Mammary epithelial cell (primary cell): ENCODE measurements at regions of chr2 and their contacts with region 1.

Region 1: GRCh38 chr2:23760736-23761135 is 166.2 kb downstream of the ATAD2B start:
- DNase-seq: no peak
- H3K4me3 ChIP-seq: no peak overlapping the region
- H3K27ac ChIP-seq: no peak overlapping the region
- H3K4me1 ChIP-seq: peaks cover 25% of the 10 kb centered on the region
- H3K27me3 ChIP-seq: no peaks in the 10 kb centered on the region
- CTCF ChIP-seq: peak; percentile 25 to 37

Region 2: GRCh38 chr2:23384551-23385349 is 376.0 kb before region 1 on chr2 and contains the start of gene KLHL29:
- CTCF ChIA-PET with region 1: no interaction called
- dilution Hi-C with region 1: no loop called
- in situ Hi-C with region 1: no loop called
- intact Hi-C with region 1: loop called (anchors 10 kb)
- DNase-seq: peak; percentile 65
- H3K4me3 ChIP-seq: peak within 1 kb of the TSS; percentile 57 to 88 (median 66)
- H3K27ac ChIP-seq: no peak within 1 kb of the TSS
- H3K4me1 ChIP-seq: peaks cover 27% of the 10 kb centered on the region
- H3K27me3 ChIP-seq: peaks cover 2% of the 10 kb centered on the region
- CTCF ChIP-seq: no peak
- total RNA-seq, gene KLHL29: 15.6 to 16.3 TPM

Region 3: DNA sequence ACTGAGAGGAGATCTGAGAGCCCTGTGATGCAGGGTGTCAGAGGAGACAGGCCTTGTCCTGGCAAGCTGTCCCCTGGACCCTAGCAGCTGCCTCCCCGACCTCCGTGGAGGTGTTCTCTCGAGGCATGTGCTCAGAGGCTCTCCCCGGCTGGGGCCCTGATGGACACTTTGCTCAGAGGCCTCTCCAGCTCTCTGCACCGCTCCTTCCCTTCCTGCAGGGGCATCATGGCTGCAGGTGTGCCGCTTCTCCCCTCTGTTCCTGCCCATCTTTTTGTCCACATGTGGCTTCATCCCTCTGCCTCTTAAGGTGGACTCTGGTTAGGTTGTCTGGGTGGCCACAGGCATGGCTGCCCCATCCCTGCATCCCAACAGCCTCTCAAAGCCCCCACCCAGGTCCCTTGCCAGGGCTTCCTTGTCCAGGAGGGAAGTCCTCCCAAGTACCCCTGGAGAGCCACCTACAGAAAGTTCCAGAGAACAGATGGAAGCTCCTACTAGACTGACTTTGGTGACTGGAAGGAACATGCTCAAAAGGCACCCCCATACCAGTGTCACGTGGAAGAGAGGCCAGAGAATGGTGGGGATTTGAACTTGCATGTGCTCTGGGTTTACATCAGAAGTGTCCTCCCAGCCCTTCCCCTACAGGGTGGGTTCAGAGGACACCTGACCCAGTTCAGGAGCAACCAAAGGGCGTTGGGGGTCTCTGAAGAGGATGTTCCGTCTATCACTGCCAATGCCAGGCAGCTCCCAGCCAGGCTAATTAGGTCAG is 255.3 kb before region 1 on chr2:
- CTCF ChIA-PET with region 1: no interaction called
- dilution Hi-C with region 1: no loop called
- in situ Hi-C with region 1: no loop called
- intact Hi-C with region 1: loop called (anchors 10 kb)
- DNase-seq: no peak
- H3K4me3 ChIP-seq: no peak overlapping the region
- H3K27ac ChIP-seq: no peak overlapping the region
- H3K4me1 ChIP-seq: peaks cover 28% of the 10 kb centered on the region
- H3K27me3 ChIP-seq: no peaks in the 10 kb centered on the region
- CTCF ChIP-seq: no peak

Region 4: GRCh38 chr2:23636426-23636825 is 124.3 kb before region 1 on chr2:
- CTCF ChIA-PET with region 1: no interaction called
- dilution Hi-C with region 1: no loop called
- in situ Hi-C with region 1: no loop called
- intact Hi-C with region 1: loop called (anchors 1 kb)
- DNase-seq: no peak
- H3K4me3 ChIP-seq: no peak overlapping the region
- H3K27ac ChIP-seq: no peak overlapping the region
- H3K4me1 ChIP-seq: no peaks in the 10 kb centered on the region
- H3K27me3 ChIP-seq: no peaks in the 10 kb centered on the region
- CTCF ChIP-seq: peak in 1 of 2 donors; percentile 54

Region 5: GRCh38 chr2:23916727-23917405 is 156.1 kb after region 1 on chr2:
- CTCF ChIA-PET with region 1: no interaction called
- dilution Hi-C with region 1: no loop called
- in situ Hi-C with region 1: no loop called
- intact Hi-C with region 1: no loop called
- DNase-seq: no peak
- H3K4me3 ChIP-seq: no peak overlapping the region
- H3K27ac ChIP-seq: no peak overlapping the region
- H3K4me1 ChIP-seq: no peaks in the 10 kb centered on the region
- H3K27me3 ChIP-seq: no peaks in the 10 kb centered on the region
- CTCF ChIP-seq: no peak